H1 (cell line): ENCODE measurements at regions of chrX and their contacts with region 1.

Region 1: DNA sequence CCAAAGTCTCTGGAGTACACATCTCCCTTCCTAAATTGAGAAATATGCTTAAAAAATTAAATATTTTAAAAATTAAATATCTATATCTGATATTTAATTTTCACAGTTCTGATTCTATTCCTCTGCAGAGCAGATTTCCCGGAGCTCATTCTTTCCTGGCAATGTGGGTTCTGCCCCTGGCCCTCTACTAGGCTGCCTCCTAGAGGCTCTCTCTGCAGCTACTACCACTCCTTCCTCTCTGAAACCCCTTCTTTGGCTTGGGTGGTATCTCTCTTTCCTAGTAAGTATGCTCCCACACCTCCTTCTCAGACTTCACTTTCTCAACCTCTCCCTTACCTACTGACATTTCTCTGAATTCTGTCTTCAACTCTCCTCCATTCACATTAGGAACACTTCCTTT is 45.3 kb downstream of the RPGR start:
- DNase-seq: no peak
- H3K4me3 ChIP-seq: no peak overlapping the region
- H3K27ac ChIP-seq: no peak overlapping the region
- H3K4me1 ChIP-seq: no peaks in the 10 kb centered on the region; a peak in 2 of 7 replicates
- H3K27me3 ChIP-seq: no peaks in the 10 kb centered on the region
- CTCF ChIP-seq: peak; percentile 19 to 38 (median 33)
- EP300 ChIP-seq: no peak
- POLR2A ChIP-seq: no peak
- RAD21 ChIP-seq: peak; percentile 54 to 56

Region 2: GRCh38 chrX:37883196-37883595 is 398.8 kb before region 1 on chrX:
- CTCF ChIA-PET with region 1: no interaction called
- POLR2A ChIA-PET with region 1: no interaction called
- DNase-seq: no peak
- H3K4me3 ChIP-seq: no peak overlapping the region
- H3K27ac ChIP-seq: no peak overlapping the region
- H3K4me1 ChIP-seq: no peaks in the 10 kb centered on the region
- H3K27me3 ChIP-seq: no peaks in the 10 kb centered on the region
- CTCF ChIP-seq: no peak
- EP300 ChIP-seq: no peak
- POLR2A ChIP-seq: no peak
- RAD21 ChIP-seq: no peak

Region 3: GRCh38 chrX:38175140-38175539 is 106.9 kb before region 1 on chrX:
- CTCF ChIA-PET with region 1: no interaction called
- POLR2A ChIA-PET with region 1: no interaction called
- DNase-seq: peak; percentile 7 to 45
- H3K4me3 ChIP-seq: no peak overlapping the region
- H3K27ac ChIP-seq: no peak overlapping the region
- H3K4me1 ChIP-seq: peaks cover 0 to 3% (median under 1%) of the 10 kb centered on the region in 4 experiments; a peak in 4 of 7 replicates
- H3K27me3 ChIP-seq: no peaks in the 10 kb centered on the region
- CTCF ChIP-seq: peak; percentile 63 to 74 (median 72)
- EP300 ChIP-seq: no peak
- POLR2A ChIP-seq: no peak
- RAD21 ChIP-seq: peak; percentile 90 to 93

Region 4: GRCh38 chrX:38192007-38192810 is 89.8 kb before region 1 on chrX:
- CTCF ChIA-PET with region 1: interaction called, 13 read pairs
- POLR2A ChIA-PET with region 1: no interaction called
- DNase-seq: peak in 1 of 2 experiments; percentile 45
- H3K4me3 ChIP-seq: no peak overlapping the region
- H3K27ac ChIP-seq: no peak overlapping the region
- H3K4me1 ChIP-seq: no peaks in the 10 kb centered on the region
- H3K27me3 ChIP-seq: no peaks in the 10 kb centered on the region
- CTCF ChIP-seq: peak; percentile 32 to 45 (median 42)
- EP300 ChIP-seq: no peak
- POLR2A ChIP-seq: no peak
- RAD21 ChIP-seq: peak; percentile 38 to 58

Region 5: GRCh38 chrX:38233891-38234667 is 48.0 kb before region 1 on chrX:
- CTCF ChIA-PET with region 1: no interaction called
- POLR2A ChIA-PET with region 1: no interaction called
- DNase-seq: no peak
- H3K4me3 ChIP-seq: no peak overlapping the region
- H3K27ac ChIP-seq: no peak overlapping the region
- H3K4me1 ChIP-seq: no peaks in the 10 kb centered on the region
- H3K27me3 ChIP-seq: no peaks in the 10 kb centered on the region
- CTCF ChIP-seq: no peak
- EP300 ChIP-seq: no peak
- POLR2A ChIP-seq: no peak
- RAD21 ChIP-seq: no peak

Region 6: DNA sequence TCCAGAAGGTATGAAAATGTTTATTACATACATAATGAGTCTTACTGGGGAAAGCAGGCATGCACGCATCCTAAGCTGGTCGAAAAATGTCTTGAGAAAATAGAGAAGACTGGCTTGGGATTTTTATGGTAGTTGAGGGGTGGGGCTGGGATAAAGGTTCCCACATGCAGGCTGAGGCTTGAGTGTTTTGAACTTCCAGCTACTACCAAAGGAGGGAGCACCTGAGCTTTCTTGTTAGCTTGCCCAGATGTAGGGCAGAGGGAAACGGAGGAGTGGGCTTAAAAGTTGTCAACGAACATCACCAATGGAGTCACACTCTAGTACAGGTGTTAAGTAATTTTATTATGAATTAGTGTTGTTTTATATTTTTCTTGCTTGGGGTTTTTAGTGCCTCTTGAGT is 21.8 kb before region 1 on chrX:
- CTCF ChIA-PET with region 1: interaction called, 25 read pairs
- POLR2A ChIA-PET with region 1: no interaction called
- DNase-seq: peak in 1 of 2 experiments; percentile 43
- H3K4me3 ChIP-seq: no peak overlapping the region
- H3K27ac ChIP-seq: no peak overlapping the region
- H3K4me1 ChIP-seq: no peaks in the 10 kb centered on the region
- H3K27me3 ChIP-seq: no peaks in the 10 kb centered on the region
- CTCF ChIP-seq: peak in 2 of 3 experiments; percentile 49 to 58; a peak in 3 of 4 replicates
- EP300 ChIP-seq: no peak
- POLR2A ChIP-seq: no peak
- RAD21 ChIP-seq: peak; percentile 54 to 62

Region 7: GRCh38 chrX:38293741-38294140 is 11.7 kb after region 1 on chrX:
- CTCF ChIA-PET with region 1: interaction called, 21 read pairs
- POLR2A ChIA-PET with region 1: no interaction called
- DNase-seq: no peak
- H3K4me3 ChIP-seq: no peak overlapping the region
- H3K27ac ChIP-seq: no peak overlapping the region
- H3K4me1 ChIP-seq: no peaks in the 10 kb centered on the region; a peak in 1 of 7 replicates
- H3K27me3 ChIP-seq: no peaks in the 10 kb centered on the region
- CTCF ChIP-seq: no peak
- EP300 ChIP-seq: no peak
- POLR2A ChIP-seq: no peak
- RAD21 ChIP-seq: no peak

Region 8: DNA sequence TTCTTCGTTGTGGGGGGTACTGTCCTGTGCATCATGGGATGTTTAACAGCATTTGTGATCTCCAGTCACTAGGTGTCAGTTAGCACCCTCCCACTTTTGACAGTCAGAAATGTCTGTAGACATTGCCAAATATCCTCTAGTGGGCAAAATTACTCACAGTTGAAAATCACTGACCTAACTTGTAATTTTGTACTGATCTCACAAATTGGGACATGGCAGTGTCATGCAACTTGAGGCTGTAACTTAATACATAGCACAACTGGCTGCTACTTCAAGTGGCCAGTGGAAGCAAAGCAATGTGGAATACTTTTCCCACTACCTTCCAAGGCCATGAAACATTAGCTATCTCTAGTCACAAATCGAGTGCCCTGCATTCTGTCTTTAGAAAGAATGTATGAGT is 256.1 kb after region 1 on chrX:
- CTCF ChIA-PET with region 1: no interaction called
- POLR2A ChIA-PET with region 1: no interaction called
- DNase-seq: no peak
- H3K4me3 ChIP-seq: no peak overlapping the region
- H3K27ac ChIP-seq: no peak overlapping the region
- H3K4me1 ChIP-seq: no peaks in the 10 kb centered on the region
- H3K27me3 ChIP-seq: no peaks in the 10 kb centered on the region
- CTCF ChIP-seq: no peak
- EP300 ChIP-seq: no peak
- POLR2A ChIP-seq: no peak
- RAD21 ChIP-seq: no peak